ENCODE measurements at regions of chr4 and their contacts with region 1.

Region 1: DNA sequence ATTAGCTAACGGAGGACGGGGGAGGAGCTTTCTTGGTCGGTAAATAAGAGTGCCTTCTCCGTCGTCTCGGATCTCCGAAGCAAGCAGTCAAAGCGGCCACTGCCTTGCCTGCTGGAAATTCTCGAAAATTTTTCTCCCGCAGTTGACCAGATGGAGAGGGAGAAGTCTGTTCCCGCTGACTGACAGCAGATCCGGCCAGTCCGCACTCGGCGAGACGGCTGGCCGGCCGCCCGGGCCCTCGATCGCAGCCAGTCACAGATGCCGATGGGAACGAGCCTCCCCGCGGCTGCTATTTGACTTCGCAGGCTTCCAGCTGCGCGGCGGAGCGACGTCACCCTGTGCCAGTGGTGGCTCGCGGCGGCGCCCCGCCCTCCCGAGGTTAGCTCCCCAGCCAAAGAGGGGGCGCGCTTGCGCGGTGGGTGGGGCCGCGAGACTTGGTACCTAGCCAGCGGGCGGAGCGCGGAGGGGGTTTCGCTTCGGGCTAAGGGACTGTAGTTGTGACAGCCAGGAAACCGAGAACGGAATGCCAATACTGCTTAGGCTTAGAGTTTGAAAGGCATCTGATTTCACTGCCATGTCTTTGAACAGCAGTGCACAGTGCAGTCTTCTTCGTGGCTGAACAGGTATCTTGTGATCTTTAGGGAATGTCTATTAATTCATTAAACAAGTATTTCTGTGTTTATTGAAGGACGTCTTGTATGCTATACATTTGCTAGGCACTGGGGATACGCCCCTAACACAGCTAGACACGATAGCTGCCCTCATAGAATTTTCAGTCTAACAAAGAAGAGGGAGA is at the start of gene PPM1K:
- DNase-seq: peak; percentile 98 to 100 (median 99)
- H3K4me3 ChIP-seq: peak within 1 kb of the TSS; percentile 62 to 98 (median 90)
- H3K27ac ChIP-seq: peak within 1 kb of the TSS; percentile 94 to 100 (median 99)
- H3K27me3 ChIP-seq: no peaks in the 10 kb centered on the region
- CTCF ChIP-seq: peak in 41 of 56 donors; percentile 4 to 57 (median 38)
- total RNA-seq, gene PPM1K: 96.3 to 246 (median 167) TPM

Region 2: GRCh38 chr4:86497980-86498862 is 1786.4 kb before region 1 on chr4:
- intact Hi-C with region 1: no loop called
- DNase-seq: peak in 2 of 10 donors; percentile 7 to 10
- H3K4me3 ChIP-seq: peak overlapping the region in 19 of 59 donors; percentile 0 to 44 (median 17)
- H3K27ac ChIP-seq: peak overlapping the region in 49 of 59 donors; percentile 1 to 85 (median 62)
- H3K27me3 ChIP-seq: no peaks in the 10 kb centered on the region
- CTCF ChIP-seq: peak; percentile 59 to 91 (median 82)

Region 3: DNA sequence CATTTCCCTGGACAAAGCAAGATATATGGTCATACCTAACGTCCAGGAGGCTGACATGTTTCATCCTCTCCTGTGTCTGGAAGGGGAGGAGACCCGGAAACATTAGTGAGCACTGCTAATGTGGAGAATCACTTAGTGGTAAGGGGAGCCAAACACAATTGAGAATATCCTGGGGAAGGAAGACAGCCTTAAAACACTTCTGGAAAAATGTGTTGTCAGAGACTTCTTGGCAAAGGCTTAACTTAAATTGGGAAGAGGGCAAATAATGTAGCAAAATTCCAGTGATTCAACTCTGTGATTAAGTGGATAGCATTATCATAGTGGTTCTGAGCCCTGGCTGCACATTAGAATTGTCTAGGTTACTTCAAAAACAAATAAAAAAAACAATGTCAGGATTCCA is 795.0 kb before region 1 on chr4:
- intact Hi-C with region 1: no loop called
- DNase-seq: no peak
- H3K4me3 ChIP-seq: no peak overlapping the region
- H3K27ac ChIP-seq: peak overlapping the region in 29 of 59 donors; percentile 0 to 69 (median 36)
- H3K27me3 ChIP-seq: no peaks in the 10 kb centered on the region
- CTCF ChIP-seq: no peak

Region 4: DNA sequence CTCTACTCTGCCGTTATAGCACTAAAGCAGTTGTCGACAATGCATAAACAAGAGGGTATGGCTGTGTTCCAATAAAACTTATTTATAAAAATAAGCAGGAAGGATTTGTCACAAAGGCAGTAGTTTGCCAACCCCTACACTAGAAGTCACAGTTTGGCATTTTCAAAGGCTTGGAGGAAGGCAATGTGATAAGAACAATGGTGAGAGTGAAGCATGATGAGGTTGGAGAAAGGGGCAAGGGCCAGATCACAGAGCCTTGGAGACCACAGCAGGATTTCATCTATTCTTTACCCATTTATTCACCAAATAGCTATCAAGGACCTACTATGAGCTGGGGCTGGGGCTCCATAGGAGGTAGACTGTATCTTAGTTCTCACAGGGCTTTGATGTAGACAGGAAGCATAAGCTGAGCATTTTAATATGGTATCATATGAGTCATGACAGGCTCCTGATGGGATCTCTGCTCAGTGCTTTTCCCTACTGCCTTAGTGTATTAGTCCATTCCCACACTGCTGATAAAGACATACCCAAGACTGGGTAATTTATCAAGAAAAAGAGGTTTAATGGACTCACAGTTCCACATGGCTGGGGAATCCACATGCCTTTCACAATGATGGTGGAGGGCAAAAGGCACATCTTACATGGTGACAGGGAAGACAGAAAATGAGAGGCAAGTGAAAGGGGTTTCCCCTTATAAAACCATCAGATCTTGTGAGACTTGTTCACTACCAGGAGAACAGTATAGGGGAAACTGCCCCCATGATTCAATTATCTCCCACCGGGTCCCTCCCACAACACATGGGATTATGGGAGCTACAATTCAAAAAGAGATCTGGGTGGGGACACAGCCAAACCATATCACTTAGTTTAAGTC is 59.2 kb before region 1 on chr4:
- intact Hi-C with region 1: loop called in 1 of 2 experiments (anchors 5 kb)
- DNase-seq: no peak
- H3K4me3 ChIP-seq: no peak overlapping the region
- H3K27ac ChIP-seq: no peak overlapping the region
- H3K27me3 ChIP-seq: no peaks in the 10 kb centered on the region
- CTCF ChIP-seq: no peak

Region 5: DNA sequence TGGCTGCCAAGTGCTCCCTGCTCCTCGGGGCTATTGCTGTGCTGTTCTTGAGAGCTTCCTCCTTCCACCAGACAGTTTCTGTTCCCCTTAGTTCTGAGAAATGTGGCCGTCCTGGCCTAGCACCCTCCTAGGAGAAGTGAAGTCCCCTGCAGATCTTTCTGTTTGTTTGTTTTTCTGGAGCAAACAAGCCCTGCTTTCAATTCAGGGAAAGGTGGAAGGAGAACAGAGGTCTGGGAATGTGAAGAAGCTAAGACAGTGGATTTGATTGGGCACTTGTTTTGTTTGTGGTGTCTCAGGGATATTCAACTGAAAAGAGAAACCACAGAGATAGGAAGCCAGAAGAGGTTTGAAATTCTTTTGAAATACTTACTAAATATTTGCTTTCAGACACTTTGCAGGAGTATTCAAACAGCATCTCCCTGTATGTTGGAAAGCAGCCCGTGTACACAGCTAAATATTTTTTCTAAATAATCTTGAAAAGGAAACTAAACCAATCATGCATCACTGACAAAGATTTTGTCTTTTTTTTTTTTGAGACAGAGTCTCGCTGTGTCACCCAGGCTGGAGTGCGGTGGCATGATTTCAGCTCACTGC is 36.2 kb after region 1 on chr4:
- intact Hi-C with region 1: no loop called
- DNase-seq: no peak
- H3K4me3 ChIP-seq: peak overlapping the region in 1 of 59 donors; percentile 27
- H3K27ac ChIP-seq: peak overlapping the region in 15 of 59 donors; percentile 1 to 58 (median 39)
- H3K27me3 ChIP-seq: no peaks in the 10 kb centered on the region
- CTCF ChIP-seq: no peak

Region 6: GRCh38 chr4:88442703-88443191 is 158.1 kb after region 1 on chr4:
- intact Hi-C with region 1: no loop called
- DNase-seq: no peak
- H3K4me3 ChIP-seq: no peak overlapping the region
- H3K27ac ChIP-seq: no peak overlapping the region
- H3K27me3 ChIP-seq: no peaks in the 10 kb centered on the region
- CTCF ChIP-seq: no peak

Region 7: DNA sequence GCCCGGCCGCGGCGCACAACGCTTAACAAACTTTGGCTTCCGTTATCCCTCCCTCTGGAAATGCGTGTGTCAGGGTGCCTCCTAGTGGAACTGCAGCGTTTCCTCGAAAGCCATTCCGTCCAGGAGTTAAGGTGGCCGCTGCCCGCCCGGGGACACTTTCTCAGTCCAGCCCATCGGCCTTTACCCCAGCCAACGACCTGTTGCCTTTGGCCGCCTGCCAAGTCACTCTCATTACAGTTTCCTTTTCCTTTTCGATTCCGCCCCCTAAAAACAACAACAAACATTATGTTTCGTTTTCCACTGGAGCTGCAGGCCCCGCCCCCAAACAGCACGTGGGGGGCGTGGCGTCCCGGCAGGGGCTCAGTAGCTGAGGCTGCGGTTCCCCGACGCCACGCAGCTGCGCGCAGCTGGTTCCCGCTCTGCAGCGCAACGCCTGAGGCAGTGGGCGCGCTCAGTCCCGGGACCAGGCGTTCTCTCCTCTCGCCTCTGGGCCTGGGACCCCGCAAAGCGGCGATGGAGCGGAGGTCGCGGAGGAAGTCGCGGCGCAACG is 172.2 kb after region 1 on chr4 and contains the start of gene HERC5:
- intact Hi-C with region 1: loop called (anchors 5 to 10 kb)
- DNase-seq: peak; percentile 22 to 79 (median 74)
- H3K4me3 ChIP-seq: peak within 1 kb of the TSS; percentile 47 to 90 (median 75)
- H3K27ac ChIP-seq: peak within 1 kb of the TSS in 53 of 59 donors; percentile 0 to 86 (median 64)
- H3K27me3 ChIP-seq: peaks cover 0 to 7% (median 0%) of the 10 kb centered on the region in 45 donors
- CTCF ChIP-seq: peak; percentile 53 to 85 (median 70)
- total RNA-seq, gene HERC5: 1.6 to 17.3 (median 4.0) TPM

Region 8: GRCh38 chr4:88523325-88524129 is 238.9 kb after region 1 on chr4 and contains the start of gene PYURF:
- intact Hi-C with region 1: loop called (anchors 2 to 10 kb)
- DNase-seq: peak; percentile 88 to 96 (median 94)
- H3K4me3 ChIP-seq: peak within 1 kb of the TSS; percentile 56 to 98 (median 87)
- H3K27ac ChIP-seq: peak within 1 kb of the TSS; percentile 54 to 96 (median 91)
- H3K27me3 ChIP-seq: no peaks in the 10 kb centered on the region
- CTCF ChIP-seq: peak in 35 of 56 donors; percentile 10 to 60 (median 31)
- total RNA-seq, gene PYURF: 31.5 to 63.5 (median 49.8) TPM